Esophagus muscularis mucosa (tissue), 4 donors: ENCODE measurements at regions of chr15 and their contacts with region 1.

Region 1: DNA sequence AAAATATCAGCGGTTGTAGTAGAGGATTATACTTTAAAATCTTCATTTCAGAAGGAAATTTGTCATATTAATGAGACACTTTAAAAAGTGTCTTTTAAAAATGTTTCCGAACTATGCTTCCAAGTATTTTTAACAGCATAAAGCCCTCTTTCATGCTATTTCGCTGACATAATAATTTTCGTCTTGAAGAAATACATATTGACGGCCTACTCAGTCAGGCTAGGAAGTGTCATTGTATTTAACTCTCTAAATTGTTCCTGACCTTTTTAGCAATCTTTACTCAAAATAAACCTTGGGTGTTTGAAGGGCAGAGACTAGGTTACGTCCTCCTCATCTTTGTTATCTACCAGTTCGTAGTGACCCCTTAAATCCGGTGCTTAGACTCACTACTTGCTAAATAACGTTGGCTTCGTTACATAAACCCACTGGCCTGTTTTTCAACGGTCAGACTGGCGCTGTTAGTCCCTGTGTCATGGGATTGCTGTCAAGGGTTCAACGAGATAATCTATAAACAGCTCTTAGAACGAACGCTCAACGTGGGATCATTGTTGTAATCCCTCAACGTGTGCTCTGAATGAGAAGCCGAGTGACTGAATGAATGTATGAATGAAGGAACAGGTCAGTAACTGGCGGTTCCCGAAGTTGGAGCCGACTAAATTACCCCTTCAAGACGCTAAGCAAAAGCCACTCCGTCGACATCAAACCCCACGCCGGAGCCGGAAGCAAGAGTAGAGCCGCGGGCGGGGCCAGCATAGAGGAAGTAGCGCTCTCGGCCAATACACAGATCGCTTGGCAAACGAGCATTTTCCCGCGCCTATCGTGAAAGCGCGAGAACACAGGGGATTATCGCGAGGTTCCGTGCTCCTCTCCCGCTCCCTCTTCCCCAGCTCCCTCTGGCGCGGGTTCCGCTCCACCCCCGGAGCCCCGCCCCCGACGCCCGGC is 516 bp upstream of the LRRC28 start:
- DNase-seq: peak; percentile 99
- H3K4me3 ChIP-seq: peak overlapping the region; percentile 78 to 90 (median 84)
- H3K27ac ChIP-seq: peak overlapping the region; percentile 85 to 95 (median 92)
- H3K4me1 ChIP-seq: peaks cover 20 to 56% (median 46%) of the 10 kb centered on the region in 4 donors
- H3K27me3 ChIP-seq: no peaks in the 10 kb centered on the region
- CTCF ChIP-seq: no peak
- EP300 ChIP-seq: no peak
- POLR2A ChIP-seq: peak; percentile 97

Region 2: GRCh38 chr15:99202180-99202552 is 48.6 kb before region 1 on chr15:
- intact Hi-C with region 1: loop called (anchors 5 kb)
- DNase-seq: no peak
- H3K4me3 ChIP-seq: no peak overlapping the region
- H3K27ac ChIP-seq: peak overlapping the region in 3 of 4 donors; percentile 1 to 41 (median 11)
- H3K4me1 ChIP-seq: peaks cover 0 to 8% (median 3%) of the 10 kb centered on the region in 4 donors
- H3K27me3 ChIP-seq: no peaks in the 10 kb centered on the region
- CTCF ChIP-seq: no peak
- EP300 ChIP-seq: no peak
- POLR2A ChIP-seq: no peak